Endothelial cell of umbilical vein (primary cell): ENCODE measurements at regions of chr5 and their contacts with region 1.

Region 1: DNA sequence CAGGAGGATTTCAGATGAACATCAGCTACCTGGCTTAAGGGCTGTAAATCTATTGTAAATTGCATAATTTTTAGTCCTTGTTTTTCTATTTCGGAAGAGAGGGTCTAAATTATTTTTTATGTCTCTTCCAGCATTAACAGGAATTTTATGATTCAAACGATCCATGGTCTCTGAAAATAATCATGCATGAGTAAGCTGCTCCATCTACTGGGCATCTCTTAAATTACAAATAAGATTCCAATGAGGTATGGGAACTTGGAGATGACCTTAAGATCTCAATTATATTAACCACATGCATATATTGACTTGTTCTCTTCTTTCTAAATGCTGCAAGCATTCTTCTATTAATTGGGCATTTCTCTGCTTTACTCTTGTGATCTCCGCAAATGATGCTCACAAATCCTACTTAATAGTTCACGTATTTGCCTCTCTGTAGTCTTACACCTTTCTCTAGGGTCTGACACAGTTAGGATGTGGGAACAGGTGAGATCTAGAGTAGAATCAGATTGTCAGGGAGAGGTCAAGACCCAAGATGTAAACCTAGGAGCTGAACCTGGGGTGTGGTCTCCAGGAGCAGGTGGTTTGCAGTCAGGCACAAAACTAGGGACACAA is 86.9 kb downstream of the NUDT12 start:
- DNase-seq: peak; percentile 66
- H3K4me3 ChIP-seq: no peak overlapping the region
- H3K27ac ChIP-seq: no peak overlapping the region
- H3K4me1 ChIP-seq: no peaks in the 10 kb centered on the region
- H3K27me3 ChIP-seq: peaks cover 0 to 2% of the 10 kb centered on the region in 2 experiments
- CTCF ChIP-seq: peak; percentile 31 to 34
- POLR2A ChIP-seq: no peak

Region 2: GRCh38 chr5:103119765-103120606 is 355.7 kb before region 1 on chr5 and contains the starts of genes GIN1 and PPIP5K2:
- CTCF ChIA-PET with region 1: no interaction called
- POLR2A ChIA-PET with region 1: no interaction called
- dilution Hi-C with region 1: no loop called
- intact Hi-C with region 1: loop called (anchors 1 kb)
- DNase-seq: peak; percentile 99
- H3K4me3 ChIP-seq: peak within 1 kb of the TSS; percentile 63 to 92 (median 92)
- H3K27ac ChIP-seq: peak within 1 kb of the TSS; percentile 93
- H3K4me1 ChIP-seq: peaks cover 19% of the 10 kb centered on the region
- H3K27me3 ChIP-seq: no peaks in the 10 kb centered on the region
- CTCF ChIP-seq: no peak
- POLR2A ChIP-seq: peak; percentile 50
- total RNA-seq, gene GIN1: 4.4 and 6.7 TPM in 2 replicates
- total RNA-seq, gene PPIP5K2: 53.5 and 69.4 TPM in 2 replicates

Region 3: GRCh38 chr5:103139264-103139865 is 336.4 kb before region 1 on chr5:
- CTCF ChIA-PET with region 1: no interaction called
- POLR2A ChIA-PET with region 1: no interaction called
- dilution Hi-C with region 1: no loop called
- intact Hi-C with region 1: loop called (anchors 5 kb)
- DNase-seq: peak; percentile 69
- H3K4me3 ChIP-seq: no peak overlapping the region
- H3K27ac ChIP-seq: no peak overlapping the region
- H3K4me1 ChIP-seq: no peaks in the 10 kb centered on the region
- H3K27me3 ChIP-seq: no peaks in the 10 kb centered on the region
- CTCF ChIP-seq: peak; percentile 82 to 89
- POLR2A ChIP-seq: no peak

Region 4: GRCh38 chr5:103232393-103232999 is 243.2 kb before region 1 on chr5:
- CTCF ChIA-PET with region 1: interaction called, 248 read pairs
- POLR2A ChIA-PET with region 1: no interaction called
- dilution Hi-C with region 1: no loop called
- intact Hi-C with region 1: loop called (anchors 1 kb)
- DNase-seq: peak; percentile 62
- H3K4me3 ChIP-seq: no peak overlapping the region
- H3K27ac ChIP-seq: no peak overlapping the region
- H3K4me1 ChIP-seq: no peaks in the 10 kb centered on the region
- H3K27me3 ChIP-seq: no peaks in the 10 kb centered on the region
- CTCF ChIP-seq: peak; percentile 57 to 68
- POLR2A ChIP-seq: no peak

Region 5: GRCh38 chr5:103444333-103445038 is 31.2 kb before region 1 on chr5:
- CTCF ChIA-PET with region 1: no interaction called
- POLR2A ChIA-PET with region 1: no interaction called
- dilution Hi-C with region 1: no loop called
- intact Hi-C with region 1: no loop called
- DNase-seq: no peak
- H3K4me3 ChIP-seq: no peak overlapping the region
- H3K27ac ChIP-seq: no peak overlapping the region
- H3K4me1 ChIP-seq: peaks cover 6% of the 10 kb centered on the region
- H3K27me3 ChIP-seq: no peaks in the 10 kb centered on the region
- CTCF ChIP-seq: no peak
- POLR2A ChIP-seq: no peak

Region 6: GRCh38 chr5:103464835-103465484 is 10.8 kb before region 1 on chr5:
- CTCF ChIA-PET with region 1: interaction called, 12 read pairs
- POLR2A ChIA-PET with region 1: no interaction called
- dilution Hi-C with region 1: no loop called
- intact Hi-C with region 1: no loop called
- DNase-seq: no peak
- H3K4me3 ChIP-seq: no peak overlapping the region
- H3K27ac ChIP-seq: no peak overlapping the region
- H3K4me1 ChIP-seq: peaks cover 33% of the 10 kb centered on the region
- H3K27me3 ChIP-seq: no peaks in the 10 kb centered on the region
- CTCF ChIP-seq: no peak
- POLR2A ChIP-seq: no peak

Region 7: GRCh38 chr5:104178829-104179456 is 703.2 kb after region 1 on chr5:
- CTCF ChIA-PET with region 1: no interaction called
- POLR2A ChIA-PET with region 1: no interaction called
- dilution Hi-C with region 1: no loop called
- intact Hi-C with region 1: loop called (anchors 5 kb)
- DNase-seq: peak; percentile 64
- H3K4me3 ChIP-seq: no peak overlapping the region
- H3K27ac ChIP-seq: no peak overlapping the region
- H3K4me1 ChIP-seq: no peaks in the 10 kb centered on the region
- H3K27me3 ChIP-seq: no peaks in the 10 kb centered on the region
- CTCF ChIP-seq: peak; percentile 59 to 63
- POLR2A ChIP-seq: no peak

Region 8: DNA sequence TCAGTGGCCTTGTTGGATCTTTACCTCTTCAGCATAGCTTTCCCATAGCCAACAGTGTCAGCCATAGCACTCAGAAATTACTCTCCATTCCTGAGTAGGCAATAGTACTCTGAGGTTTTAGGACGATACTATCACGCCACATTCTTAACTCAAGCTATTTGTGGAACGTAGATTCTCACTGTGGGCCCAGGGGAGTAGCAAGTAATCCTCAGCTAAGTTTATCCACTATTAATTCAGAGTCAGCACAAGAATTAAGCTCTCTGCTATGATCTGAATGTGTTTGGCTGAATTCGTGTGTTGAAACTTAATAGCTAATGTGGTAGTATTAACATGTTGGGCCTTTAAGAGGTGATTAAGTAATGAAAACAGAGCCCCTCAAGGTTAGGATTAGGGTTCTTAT is 945.7 kb after region 1 on chr5:
- CTCF ChIA-PET with region 1: no interaction called
- POLR2A ChIA-PET with region 1: no interaction called
- dilution Hi-C with region 1: no loop called
- intact Hi-C with region 1: no loop called
- DNase-seq: no peak
- H3K4me3 ChIP-seq: no peak overlapping the region
- H3K27ac ChIP-seq: no peak overlapping the region
- H3K4me1 ChIP-seq: no peaks in the 10 kb centered on the region
- H3K27me3 ChIP-seq: no peaks in the 10 kb centered on the region
- CTCF ChIP-seq: no peak
- POLR2A ChIP-seq: no peak